H1 (cell line): ENCODE measurements at regions of chr6 and their contacts with region 1.

Region 1: GRCh38 chr6:117456972-117457371 is 25.5 kb upstream of the DCBLD1 start:
- DNase-seq: no peak
- H3K4me3 ChIP-seq: no peak overlapping the region
- H3K27ac ChIP-seq: no peak overlapping the region
- H3K4me1 ChIP-seq: peaks cover 0 to 2% (median under 1%) of the 10 kb centered on the region in 4 experiments; a peak in 3 of 7 replicates
- H3K27me3 ChIP-seq: no peaks in the 10 kb centered on the region
- CTCF ChIP-seq: no peak
- EP300 ChIP-seq: no peak
- POLR2A ChIP-seq: no peak
- RAD21 ChIP-seq: no peak

Region 2: DNA sequence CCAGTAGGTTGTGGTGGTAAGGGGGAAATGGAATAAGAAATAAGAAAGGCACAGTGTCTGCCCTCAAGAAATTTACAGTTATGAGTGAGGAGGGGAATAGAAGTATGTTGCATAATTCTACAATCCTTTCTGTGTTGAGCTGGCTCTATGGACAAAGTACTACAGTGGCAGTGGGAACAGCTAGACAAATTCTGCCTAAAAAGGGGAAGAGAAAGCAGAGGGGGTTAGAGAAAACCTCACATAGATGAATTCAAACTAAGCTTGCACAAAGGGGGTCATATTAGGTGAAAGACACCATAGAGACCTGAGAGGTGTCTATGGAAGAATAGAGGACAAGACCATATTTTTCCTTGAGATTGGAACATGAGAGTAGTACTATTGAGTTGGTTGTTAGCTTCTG is 338.5 kb before region 1 on chr6:
- CTCF ChIA-PET with region 1: no interaction called
- POLR2A ChIA-PET with region 1: no interaction called
- DNase-seq: no peak
- H3K4me3 ChIP-seq: no peak overlapping the region
- H3K27ac ChIP-seq: no peak overlapping the region
- H3K4me1 ChIP-seq: no peaks in the 10 kb centered on the region; a peak in 1 of 7 replicates
- H3K27me3 ChIP-seq: no peaks in the 10 kb centered on the region
- CTCF ChIP-seq: no peak
- EP300 ChIP-seq: no peak
- POLR2A ChIP-seq: no peak
- RAD21 ChIP-seq: no peak

Region 3: DNA sequence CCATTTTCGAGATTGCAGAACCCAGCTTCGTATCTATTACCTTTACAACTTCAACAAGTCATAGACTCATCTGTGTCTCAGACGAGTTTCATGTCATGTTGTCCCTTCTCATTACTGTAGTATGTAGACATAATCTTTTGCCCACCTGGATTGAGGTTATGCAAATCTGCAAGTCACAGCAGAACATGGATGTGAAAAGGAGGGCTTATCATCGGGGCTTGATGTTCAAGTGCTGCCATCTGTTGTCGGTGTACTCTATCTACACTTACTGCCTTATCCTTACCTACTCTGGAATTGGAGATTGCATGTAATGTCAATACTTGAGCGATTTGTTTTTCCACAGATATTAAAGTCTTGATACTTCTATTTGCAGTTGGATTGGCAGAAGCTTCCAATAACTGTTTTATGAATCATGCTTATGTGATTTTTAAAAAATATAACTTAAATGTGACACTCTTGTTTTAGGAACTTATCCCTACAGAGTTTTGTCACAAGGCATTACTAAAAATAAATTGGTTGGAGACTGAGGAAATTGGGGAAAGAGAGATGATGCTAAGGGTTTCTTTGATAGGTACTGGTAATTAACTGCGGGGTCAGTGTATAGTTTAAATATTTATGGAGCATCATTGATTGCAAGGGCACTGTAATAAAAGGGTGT is 148.3 kb after region 1 on chr6:
- CTCF ChIA-PET with region 1: interaction called, 54 read pairs
- POLR2A ChIA-PET with region 1: no interaction called
- DNase-seq: no peak
- H3K4me3 ChIP-seq: no peak overlapping the region
- H3K27ac ChIP-seq: no peak overlapping the region
- H3K4me1 ChIP-seq: no peaks in the 10 kb centered on the region
- H3K27me3 ChIP-seq: no peaks in the 10 kb centered on the region
- CTCF ChIP-seq: peak in 2 of 3 experiments; percentile 72 to 82; a peak in 3 of 4 replicates
- EP300 ChIP-seq: no peak
- POLR2A ChIP-seq: no peak
- RAD21 ChIP-seq: peak; percentile 80 to 81